ENCODE measurements at regions of chr18 and their contacts with region 1.

Region 1: DNA sequence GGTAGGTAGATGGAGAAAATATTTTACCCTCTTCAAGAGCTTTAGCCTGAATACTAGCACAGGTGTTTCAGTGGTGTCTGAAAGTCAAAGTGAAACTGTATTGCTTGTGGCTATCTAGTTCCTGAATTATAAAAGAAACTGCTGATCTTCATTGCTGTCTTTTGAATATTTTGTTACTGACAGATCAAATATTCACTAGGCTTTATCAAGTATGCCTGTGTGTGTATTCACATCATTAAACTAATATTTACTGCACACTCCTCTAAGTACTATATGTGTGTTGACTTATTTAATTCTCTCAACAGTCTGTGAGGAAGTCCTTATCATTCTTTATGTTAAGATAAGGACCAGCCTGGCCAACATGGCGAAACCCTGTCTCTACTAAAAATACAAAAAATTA is 139.6 kb downstream of the SOCS6 start:
- ATAC-seq: no peak
- H3K4me3 ChIP-seq: no peak overlapping the region
- H3K27ac ChIP-seq: no peak overlapping the region
- H3K4me1 ChIP-seq: no peaks in the 10 kb centered on the region

Region 2: DNA sequence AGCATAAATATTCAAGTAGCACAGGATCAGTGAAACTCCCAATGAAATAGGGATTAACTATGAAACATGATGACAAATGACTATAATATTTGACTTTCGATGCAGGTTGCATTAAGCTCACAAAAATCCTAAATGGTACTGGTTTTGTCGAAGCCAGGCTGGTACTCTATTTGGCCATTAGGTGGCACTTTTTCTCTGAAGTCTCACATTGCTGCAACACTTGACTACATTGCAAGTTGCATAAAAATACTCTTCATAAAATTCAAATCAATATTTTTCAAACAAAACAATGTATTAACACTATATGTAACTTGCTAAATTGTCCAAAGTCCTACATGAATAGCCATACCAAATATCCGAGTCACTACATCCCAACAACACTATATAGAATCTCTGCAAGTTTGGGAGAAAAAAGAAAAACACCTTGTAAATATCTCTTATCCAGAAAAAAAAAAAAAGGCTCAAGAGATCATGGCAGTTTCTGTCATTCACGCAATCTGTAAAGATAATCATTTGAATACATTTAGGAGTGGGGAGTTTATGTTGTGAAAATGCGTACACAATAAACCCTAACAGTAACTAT is 232.5 kb before region 1 on chr18:
- in situ Hi-C with region 1: loop called (anchors 10 to 25 kb)
- ATAC-seq: peak in 4 of 8 experiments; percentile 26 to 67 (median 55)
- H3K4me3 ChIP-seq: no peak overlapping the region
- H3K27ac ChIP-seq: no peak overlapping the region
- H3K4me1 ChIP-seq: no peaks in the 10 kb centered on the region

Region 3: DNA sequence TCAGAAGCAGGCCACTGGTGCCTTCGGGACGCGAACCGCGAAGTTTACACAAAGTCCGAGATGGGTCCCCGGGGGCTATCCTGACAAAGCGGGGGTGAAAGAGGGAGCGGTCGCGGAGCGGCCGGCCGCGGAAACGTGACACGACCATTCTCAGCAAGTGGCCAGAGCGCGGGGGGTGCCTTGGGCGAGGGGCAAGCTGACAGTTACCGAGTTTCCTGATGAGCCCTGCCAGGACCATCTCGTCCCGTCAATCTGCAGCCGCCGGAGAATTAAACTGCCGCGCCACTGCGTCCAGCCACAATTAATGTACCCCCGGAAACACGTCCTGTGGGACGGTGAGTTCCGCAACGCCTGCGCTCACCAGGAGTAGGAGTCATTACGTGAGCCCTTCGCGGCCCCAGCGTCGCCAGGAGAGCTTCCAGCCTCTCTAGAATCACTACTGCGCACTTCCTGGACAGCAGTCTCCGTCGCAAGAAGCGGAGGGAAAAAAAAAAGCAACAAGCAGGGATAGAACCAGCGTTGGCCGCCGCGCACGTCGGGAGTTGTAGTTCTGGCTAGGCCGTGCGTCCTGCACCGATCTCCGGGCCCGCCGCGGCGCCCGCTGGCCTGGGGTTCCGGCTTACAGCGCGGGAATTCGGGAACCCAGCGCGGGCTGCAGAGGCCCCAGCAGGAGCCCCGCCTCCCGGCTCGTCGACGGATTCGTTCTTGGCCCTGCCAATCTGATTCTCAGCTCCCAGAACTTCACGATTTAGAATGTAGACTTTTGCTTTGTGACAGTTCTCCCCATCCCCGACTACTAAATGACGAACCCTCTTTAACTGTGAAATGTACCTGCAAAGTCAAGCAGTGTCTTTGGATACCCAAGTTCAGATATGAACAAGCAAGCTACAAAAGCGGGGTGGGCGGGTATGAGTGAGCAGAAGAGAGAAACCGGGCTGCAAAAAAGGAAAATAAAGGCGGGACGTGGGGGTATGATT is 222.7 kb before region 1 on chr18 and contains the start of gene RTTN:
- in situ Hi-C with region 1: loop called in 2 of 9 experiments (anchors 10 to 25 kb)
- ATAC-seq: peak; percentile 98 to 99 (median 98)
- H3K4me3 ChIP-seq: peak within 1 kb of the TSS; percentile 65 to 95 (median 74)
- H3K27ac ChIP-seq: peak within 1 kb of the TSS; percentile 97 to 99
- H3K4me1 ChIP-seq: peaks cover 6 to 9% of the 10 kb centered on the region in 2 donors
- total RNA-seq, gene RTTN: 6.2 to 43.6 (median 13.7) TPM

Region 4: GRCh38 chr18:70288851-70289328 is 139.5 kb before region 1 on chr18 and contains the start of gene SOCS6:
- in situ Hi-C with region 1: loop called in 1 of 9 experiments (anchors 10 kb)
- ATAC-seq: peak; percentile 67 to 84 (median 72)
- H3K4me3 ChIP-seq: peak within 1 kb of the TSS; percentile 81 to 96 (median 95)
- H3K27ac ChIP-seq: peak within 1 kb of the TSS; percentile 78 to 93
- H3K4me1 ChIP-seq: peaks cover 9 to 11% of the 10 kb centered on the region in 2 donors
- total RNA-seq, gene SOCS6: 9.1 to 19.7 (median 13.3) TPM